MCF 10A (cell line): ENCODE measurements at regions of chr9 and their contacts with region 1.

Region 1: DNA sequence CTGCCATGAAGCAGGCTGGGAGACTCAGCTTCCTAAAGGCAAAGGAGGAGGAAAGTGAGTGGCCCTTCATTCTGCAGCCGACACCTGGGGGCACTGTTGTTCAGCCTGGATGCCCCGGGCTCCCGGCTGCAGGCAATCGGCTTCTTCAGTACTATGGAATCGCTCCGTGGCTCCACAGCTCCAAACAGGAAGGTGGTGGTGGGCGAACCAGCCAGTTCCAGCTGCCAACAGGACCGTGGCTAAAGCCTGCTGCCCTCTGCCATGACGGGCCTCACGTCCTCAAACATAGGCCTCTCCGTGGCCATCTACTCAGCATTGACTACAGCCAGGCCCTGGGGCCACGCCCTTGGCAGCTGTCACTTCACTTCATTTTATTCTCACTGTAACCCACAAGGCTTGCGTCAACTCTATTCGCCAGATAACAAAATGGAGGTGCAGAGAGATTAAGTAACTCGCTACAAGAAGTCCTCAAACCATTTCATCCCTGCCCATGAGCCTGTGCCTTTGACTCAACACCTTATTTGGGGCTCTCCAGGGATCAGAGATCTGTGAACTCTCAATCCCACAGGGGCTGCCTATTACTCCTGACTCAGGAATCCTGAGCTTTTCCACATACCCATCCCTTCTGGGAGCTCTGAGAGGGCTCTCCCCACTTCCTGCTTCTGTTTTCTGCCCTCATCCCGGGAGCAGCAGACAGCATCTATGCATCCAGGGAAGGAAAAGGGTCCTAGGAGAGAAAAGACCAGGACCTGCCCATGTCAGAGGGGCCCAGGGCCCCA is 38.0 kb downstream of the PAX5 start:
- DNase-seq: peak; percentile 71
- H3K4me3 Mint-ChIP-seq: no peak overlapping the region
- H3K27ac Mint-ChIP-seq: no peak overlapping the region
- H3K4me1 Mint-ChIP-seq: peaks cover 20% of the 10 kb centered on the region
- H3K27me3 Mint-ChIP-seq: peaks cover 19% of the 10 kb centered on the region
- CTCF ChIP-seq: peak; percentile 81

Region 2: GRCh38 chr9:36632892-36633291 is 363.2 kb before region 1 on chr9:
- CTCF ChIA-PET with region 1: interaction called, 3 read pairs
- POLR2A ChIA-PET with region 1: no interaction called
- intact Hi-C with region 1: loop called (anchors 5 kb)
- DNase-seq: peak; percentile 47
- H3K4me3 Mint-ChIP-seq: no peak overlapping the region
- H3K27ac Mint-ChIP-seq: no peak overlapping the region
- H3K4me1 Mint-ChIP-seq: no peaks in the 10 kb centered on the region
- H3K27me3 Mint-ChIP-seq: no peaks in the 10 kb centered on the region
- CTCF ChIP-seq: peak; percentile 45

Region 3: DNA sequence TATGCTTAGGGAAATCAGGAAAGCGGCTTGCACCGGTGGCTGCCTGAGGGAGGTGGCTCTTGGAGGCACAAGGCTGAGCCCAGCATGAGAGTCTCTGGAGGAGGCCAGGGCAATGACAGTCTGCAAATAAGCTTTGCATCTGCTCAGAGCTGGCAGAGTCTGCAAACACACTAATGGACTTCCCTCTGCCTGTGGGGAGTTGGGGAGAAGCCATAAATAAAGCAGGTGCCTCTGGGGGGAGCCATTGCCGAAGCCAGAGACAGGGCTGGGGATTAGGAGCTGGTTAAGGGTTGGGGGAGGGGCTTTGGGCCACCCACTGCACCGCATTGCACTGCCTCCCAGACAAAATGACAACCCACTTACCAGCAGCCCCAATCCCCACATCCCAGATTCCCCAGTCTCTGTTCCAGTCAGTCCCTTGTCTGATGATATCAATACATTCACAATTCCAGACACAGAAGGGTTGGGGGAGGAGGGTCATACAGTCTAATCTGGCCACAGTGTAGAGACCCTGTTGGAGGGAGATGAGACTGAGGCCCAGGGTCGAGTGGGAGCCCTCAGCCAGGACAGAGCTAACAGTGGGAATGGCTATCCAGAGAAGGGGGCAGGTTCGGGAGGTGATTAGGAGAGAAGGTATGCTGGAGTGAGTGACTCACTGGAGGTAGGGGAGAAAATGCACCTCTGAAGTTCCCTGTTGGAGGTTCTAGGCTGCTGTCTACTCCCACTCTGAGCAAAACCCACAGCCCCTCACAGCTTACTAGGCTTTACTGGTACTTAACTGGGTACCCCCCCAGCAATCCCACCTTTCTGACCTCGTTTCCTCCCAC is 15.8 kb before region 1 on chr9:
- CTCF ChIA-PET with region 1: interaction called, 16 read pairs
- POLR2A ChIA-PET with region 1: interaction called, 5 read pairs
- intact Hi-C with region 1: no loop called
- DNase-seq: peak; percentile 29
- H3K4me3 Mint-ChIP-seq: no peak overlapping the region
- H3K27ac Mint-ChIP-seq: no peak overlapping the region
- H3K4me1 Mint-ChIP-seq: peaks cover 20% of the 10 kb centered on the region
- H3K27me3 Mint-ChIP-seq: peaks cover 20% of the 10 kb centered on the region
- CTCF ChIP-seq: no peak

Region 4: DNA sequence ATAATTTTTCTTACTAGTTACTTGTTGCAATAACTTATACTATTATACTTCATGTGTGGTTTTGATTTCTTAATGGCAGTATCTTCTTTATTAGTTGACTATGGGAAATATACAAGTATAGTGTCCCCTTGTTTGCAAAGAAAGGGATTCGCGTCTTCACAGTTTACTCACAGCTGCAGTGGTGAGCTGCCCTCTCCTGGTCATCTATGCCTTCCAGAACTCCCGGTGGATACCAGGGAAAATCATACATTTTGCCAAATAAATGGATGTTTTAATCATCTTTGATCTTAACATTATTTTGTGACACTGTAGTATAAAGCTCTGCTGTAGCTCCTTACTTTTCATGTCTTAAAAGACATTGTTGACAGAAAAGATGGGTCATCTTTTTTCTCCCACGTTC is 266.3 kb after region 1 on chr9:
- CTCF ChIA-PET with region 1: interaction called, 3 read pairs
- POLR2A ChIA-PET with region 1: no interaction called
- intact Hi-C with region 1: loop called (anchors 10 kb)
- DNase-seq: peak; percentile 27
- H3K4me3 Mint-ChIP-seq: no peak overlapping the region
- H3K27ac Mint-ChIP-seq: no peak overlapping the region
- H3K4me1 Mint-ChIP-seq: peaks cover 5% of the 10 kb centered on the region
- H3K27me3 Mint-ChIP-seq: no peaks in the 10 kb centered on the region
- CTCF ChIP-seq: peak; percentile 33

Region 5: GRCh38 chr9:37329576-37329975 is 333.5 kb after region 1 on chr9:
- CTCF ChIA-PET with region 1: interaction called, 4 read pairs
- POLR2A ChIA-PET with region 1: interaction called, 3 read pairs
- intact Hi-C with region 1: loop called (anchors 1 kb)
- DNase-seq: peak; percentile 46
- H3K4me3 Mint-ChIP-seq: no peak overlapping the region
- H3K27ac Mint-ChIP-seq: no peak overlapping the region
- H3K4me1 Mint-ChIP-seq: no peaks in the 10 kb centered on the region
- H3K27me3 Mint-ChIP-seq: no peaks in the 10 kb centered on the region
- CTCF ChIP-seq: peak; percentile 39

Region 6: GRCh38 chr9:37415011-37415719 is 419.0 kb after region 1 on chr9:
- CTCF ChIA-PET with region 1: interaction called, 5 read pairs
- POLR2A ChIA-PET with region 1: interaction called, 4 read pairs
- intact Hi-C with region 1: loop called (anchors 10 kb)
- DNase-seq: peak; percentile 85
- H3K4me3 Mint-ChIP-seq: peak overlapping the region; percentile 32
- H3K27ac Mint-ChIP-seq: peak overlapping the region; percentile 80
- H3K4me1 Mint-ChIP-seq: peaks cover 48% of the 10 kb centered on the region
- H3K27me3 Mint-ChIP-seq: no peaks in the 10 kb centered on the region
- CTCF ChIP-seq: peak; percentile 72